Heart left ventricle (tissue), 16 donors: ENCODE measurements at regions of chr15 and their contacts with region 1.

Region 1: GRCh38 chr15:62558640-62559380 is 393.7 kb upstream of the C2CD4B start:
- DNase-seq: peak in 4 of 5 donors; percentile 54 to 78 (median 74)
- ATAC-seq: peak; percentile 55 to 86 (median 84)
- H3K4me3 ChIP-seq: no peak overlapping the region
- H3K27ac ChIP-seq: peak overlapping the region in 9 of 12 donors; percentile 34 to 75 (median 43)
- H3K4me1 ChIP-seq: peaks cover 0 to 34% (median 21%) of the 10 kb centered on the region in 12 donors
- H3K27me3 ChIP-seq: no peaks in the 10 kb centered on the region
- CTCF ChIP-seq: no peak
- POLR2A ChIP-seq: no peak

Region 2: DNA sequence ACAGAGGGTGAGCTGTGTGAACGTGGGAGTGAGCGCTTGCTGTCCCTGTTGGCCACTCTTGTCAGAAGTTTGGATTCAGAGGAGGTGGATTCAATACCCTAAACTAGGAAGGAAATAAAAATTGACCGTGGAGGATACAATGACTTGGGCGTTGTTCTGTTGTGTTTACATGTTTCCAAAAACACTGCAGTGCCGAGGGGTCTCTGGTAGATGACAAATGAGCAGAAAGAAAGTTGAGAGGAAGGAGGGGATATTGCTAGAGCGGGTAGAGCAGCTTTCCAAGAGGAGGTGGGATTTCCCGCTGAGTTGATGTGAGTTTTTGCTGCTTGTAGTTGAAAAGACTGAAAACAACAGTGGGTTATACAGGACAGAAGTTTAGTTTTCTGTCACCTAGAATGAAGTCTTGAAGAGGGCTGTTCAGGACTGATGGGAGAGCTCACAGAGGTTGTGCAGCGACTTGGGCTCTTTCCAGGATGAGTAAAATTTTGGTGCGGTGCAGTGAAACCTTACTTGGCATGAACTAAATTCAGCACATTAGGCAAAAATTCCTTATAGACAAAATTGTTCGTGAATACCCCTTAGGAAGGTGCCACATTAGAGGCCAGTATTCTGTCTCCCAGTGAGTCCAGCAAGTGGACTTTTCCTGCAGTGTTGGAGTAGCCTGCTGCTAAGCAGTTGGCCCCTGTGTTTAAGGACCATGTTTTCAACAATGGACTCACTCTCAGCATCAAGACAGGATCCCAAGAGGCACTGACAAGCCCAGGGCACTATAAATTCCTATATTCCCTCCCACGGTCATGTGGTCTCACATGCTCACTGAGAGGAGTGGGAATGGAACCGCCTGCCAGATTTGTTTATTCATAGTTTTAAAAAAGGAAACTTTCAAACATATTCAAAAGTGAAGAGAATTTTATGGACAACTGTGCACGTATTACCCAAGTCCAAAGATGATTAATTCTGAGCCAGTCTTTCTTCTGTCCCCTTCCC is 41.3 kb after region 1 on chr15:
- intact Hi-C with region 1: loop called in 1 of 10 experiments (anchors 5 kb)
- DNase-seq: no peak
- ATAC-seq: peak in 1 of 4 donors; percentile 23
- H3K4me3 ChIP-seq: no peak overlapping the region
- H3K27ac ChIP-seq: no peak overlapping the region
- H3K4me1 ChIP-seq: peaks cover 0 to 27% (median 11%) of the 10 kb centered on the region in 12 donors
- H3K27me3 ChIP-seq: no peaks in the 10 kb centered on the region
- CTCF ChIP-seq: no peak
- POLR2A ChIP-seq: no peak

Region 3: GRCh38 chr15:62809112-62809967 is 250.5 kb after region 1 on chr15:
- intact Hi-C with region 1: no loop called
- DNase-seq: no peak
- ATAC-seq: no peak
- H3K4me3 ChIP-seq: no peak overlapping the region
- H3K27ac ChIP-seq: no peak overlapping the region
- H3K4me1 ChIP-seq: peaks cover 0 to 5% (median 0%) of the 10 kb centered on the region in 12 donors
- H3K27me3 ChIP-seq: no peaks in the 10 kb centered on the region
- CTCF ChIP-seq: no peak
- POLR2A ChIP-seq: no peak